ENCODE measurements at regions of chrX and their contacts with region 1.

Region 1: DNA sequence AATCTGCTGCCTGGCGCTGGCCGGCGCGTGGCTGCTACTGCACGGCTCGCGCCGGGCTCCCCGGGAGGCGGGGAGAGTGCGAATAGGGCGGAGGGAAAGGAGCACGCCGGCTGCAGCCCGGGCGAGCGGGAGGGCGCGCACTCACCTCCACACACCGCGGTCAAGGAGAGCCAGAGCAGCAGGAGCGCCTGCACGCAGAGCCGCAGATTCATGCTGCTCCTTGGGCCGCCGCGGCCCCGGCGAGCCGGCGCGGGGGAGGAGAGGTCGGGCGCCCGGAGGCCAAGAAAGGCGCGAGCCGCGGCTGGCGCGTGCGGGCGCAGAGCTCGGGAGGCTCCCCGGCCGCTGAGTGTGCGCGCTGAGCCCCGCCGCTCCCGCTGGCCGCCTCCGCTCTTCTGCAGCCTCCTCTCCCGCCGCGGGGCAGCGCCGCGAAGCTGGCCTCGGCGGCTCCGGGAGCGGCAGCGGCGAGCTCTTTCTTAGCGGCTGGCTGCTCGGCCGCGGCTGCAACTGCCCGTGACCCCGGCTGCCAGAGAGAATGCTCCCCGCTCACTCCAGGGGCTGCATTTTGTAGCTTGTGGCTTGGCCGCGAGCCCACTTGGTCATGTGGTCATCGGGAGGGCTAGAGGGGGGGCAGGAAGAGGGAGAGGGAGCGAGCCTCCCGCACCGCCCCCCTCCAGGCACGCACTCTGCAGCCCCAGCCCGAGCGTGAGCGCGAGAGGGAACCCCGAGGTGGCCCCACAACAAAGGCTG is at the start of gene APLN:
- DNase-seq: peak; percentile 62
- ATAC-seq: peak; percentile 67
- total RNA-seq, gene APLN: 16.8 TPM

Region 2: DNA sequence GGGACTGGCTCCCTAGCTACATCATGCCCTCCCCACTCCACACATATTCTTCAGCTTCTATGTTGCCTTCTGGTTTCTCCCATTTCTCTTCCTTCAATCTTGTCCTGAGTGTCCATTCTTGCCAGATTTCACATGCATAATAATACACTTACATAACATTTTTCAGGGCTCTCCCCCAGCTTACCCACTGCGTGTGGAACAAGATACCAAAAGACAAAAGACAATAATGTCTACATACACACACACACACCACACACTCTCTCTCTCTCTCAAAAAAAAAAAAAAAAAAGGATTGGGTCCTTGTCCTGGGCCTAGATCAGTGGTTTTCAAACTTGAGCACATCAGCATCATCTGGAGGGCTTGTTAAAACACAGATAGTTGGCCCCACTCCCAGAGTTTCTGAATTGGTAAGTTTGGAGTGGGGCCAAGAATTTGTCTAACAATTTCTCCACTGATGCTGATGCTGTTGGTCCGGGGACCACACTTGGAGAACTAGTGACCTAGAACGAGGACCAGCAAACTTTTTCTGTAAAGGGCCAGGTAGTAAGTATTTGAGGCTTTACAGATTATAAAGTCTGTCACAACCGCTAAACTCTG is 124.8 kb before region 1 on chrX:
- intact Hi-C with region 1: no loop called
- DNase-seq: no peak
- ATAC-seq: no peak

Region 3: GRCh38 chrX:129706400-129707072 is 51.9 kb after region 1 on chrX:
- intact Hi-C with region 1: loop called (anchors 5 kb)
- DNase-seq: peak; percentile 77
- ATAC-seq: peak; percentile 74

Region 4: GRCh38 chrX:129726307-129727111 is 71.9 kb after region 1 on chrX:
- intact Hi-C with region 1: loop called (anchors 5 kb)
- DNase-seq: no peak
- ATAC-seq: peak; percentile 83

Region 5: GRCh38 chrX:130339408-130340222 is 685.0 kb after region 1 on chrX and contains the start of gene SLC25A14:
- intact Hi-C with region 1: no loop called
- DNase-seq: peak; percentile 88
- ATAC-seq: peak; percentile 86
- total RNA-seq, gene SLC25A14: 4.8 TPM

Measured in Right ventricle myocardium inferior (tissue), 1 donor.